ENCODE measurements at regions of chr7 and their contacts with region 1.

Region 1: GRCh38 chr7:23679898-23680413 is at the start of gene FAM221A:
- DNase-seq: peak; percentile 95
- H3K4me3 ChIP-seq: peak within 1 kb of the TSS; percentile 68 to 74
- H3K27ac ChIP-seq: peak within 1 kb of the TSS in 1 of 2 experiments; percentile 84; a peak in 2 of 4 replicates
- H3K4me1 ChIP-seq: peaks cover 0 to 6% of the 10 kb centered on the region in 2 experiments; a peak in 1 of 4 replicates
- H3K27me3 ChIP-seq: no peaks in the 10 kb centered on the region
- CTCF ChIP-seq: peak; percentile 77
- EP300 ChIP-seq: peak in 1 of 2 experiments; percentile 9; a peak in 1 of 4 replicates
- RAD21 ChIP-seq: no peak
- polyA plus RNA-seq, gene FAM221A: 9.7 and 10.5 TPM in 2 replicates

Region 2: DNA sequence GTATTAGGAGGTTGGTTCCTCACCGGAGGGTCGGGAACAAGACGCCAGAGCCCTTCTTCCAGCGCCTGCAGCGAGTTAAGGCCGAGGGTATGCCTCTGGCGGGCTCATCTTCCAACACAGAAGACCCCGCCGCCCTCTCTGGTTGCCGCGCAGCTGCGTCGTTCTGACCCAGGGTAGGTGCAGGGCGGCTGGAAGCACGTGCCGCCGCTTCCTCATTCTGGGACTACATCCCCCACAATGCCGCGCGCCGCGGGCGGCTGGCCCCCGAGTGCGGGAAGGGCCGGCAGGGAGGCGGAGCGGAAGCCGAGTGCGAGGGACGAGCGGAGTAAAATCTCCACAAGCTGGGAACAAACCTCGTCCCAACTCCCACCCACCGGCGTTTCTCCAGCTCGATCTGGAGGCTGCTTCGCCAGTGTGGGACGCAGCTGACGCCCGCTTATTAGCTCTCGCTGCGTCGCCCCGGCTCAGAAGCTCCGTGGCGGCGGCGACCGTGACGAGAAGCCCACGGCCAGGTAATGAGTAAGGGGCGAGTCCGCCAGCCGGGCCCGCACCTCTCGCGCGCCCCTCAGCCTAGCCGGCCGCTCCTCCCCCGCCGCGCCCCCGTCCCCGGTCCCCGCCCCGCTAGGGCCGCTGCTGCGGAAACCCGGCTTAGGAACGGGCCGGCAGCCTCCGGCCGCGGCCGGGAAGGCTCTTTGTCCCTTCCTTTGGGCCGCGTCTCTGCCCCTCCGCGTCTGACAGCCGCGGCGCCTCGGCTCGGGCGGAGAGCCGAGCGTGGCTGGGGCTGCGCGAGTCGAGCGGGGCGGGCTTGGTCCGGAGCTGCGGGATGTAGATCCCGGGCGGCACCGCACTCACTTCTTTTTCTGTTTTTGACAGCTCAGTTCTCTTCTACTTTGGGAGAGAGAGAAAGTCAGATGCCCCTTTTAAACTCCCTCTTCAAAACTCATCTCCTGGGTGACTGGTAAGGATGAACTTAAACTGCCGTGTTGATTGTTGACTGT is 82.6 kb before region 1 on chr7 and contains the start of gene CCDC126:
- CTCF ChIA-PET with region 1: interaction called, 10 read pairs
- POLR2A ChIA-PET with region 1: interaction called, 4 read pairs
- DNase-seq: peak; percentile 98
- H3K4me3 ChIP-seq: peak within 1 kb of the TSS; percentile 73 to 77
- H3K27ac ChIP-seq: peak within 1 kb of the TSS; percentile 87 to 90
- H3K4me1 ChIP-seq: peaks cover 0 to 10% of the 10 kb centered on the region in 2 experiments; a peak in 2 of 4 replicates
- H3K27me3 ChIP-seq: no peaks in the 10 kb centered on the region
- CTCF ChIP-seq: no peak
- EP300 ChIP-seq: peak in 1 of 2 experiments; percentile 6; a peak in 1 of 4 replicates
- RAD21 ChIP-seq: no peak
- polyA plus RNA-seq, gene CCDC126: 5.5 and 6.8 TPM in 2 replicates

Region 3: DNA sequence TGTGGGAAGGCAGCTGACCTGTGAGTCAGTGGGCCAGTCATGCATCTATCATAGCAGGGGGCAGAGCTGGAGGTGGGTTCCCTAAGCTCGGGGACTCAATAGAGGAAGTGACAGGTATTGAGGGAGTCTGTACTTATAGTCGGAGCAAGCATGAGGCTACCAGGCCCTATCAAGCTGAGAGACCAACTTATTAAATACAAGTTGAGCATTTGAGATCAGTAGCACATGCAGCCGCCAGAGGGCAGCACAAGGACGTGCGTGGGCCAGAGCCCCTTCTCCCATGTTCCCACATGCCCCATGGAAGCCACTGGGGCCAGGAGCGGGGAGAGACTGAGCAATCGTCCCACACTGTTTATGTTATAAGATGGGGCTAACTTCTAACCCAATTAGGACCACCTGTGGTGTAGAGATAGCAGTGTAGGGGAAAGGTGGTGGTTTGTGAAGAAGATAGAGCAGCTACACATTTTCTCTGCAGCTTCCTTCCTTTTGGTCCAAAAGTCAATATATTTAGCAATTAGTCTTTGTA is 17.0 kb after region 1 on chr7:
- CTCF ChIA-PET with region 1: interaction called, 41 read pairs
- POLR2A ChIA-PET with region 1: interaction called, 3 read pairs
- DNase-seq: peak; percentile 61
- H3K4me3 ChIP-seq: no peak overlapping the region
- H3K27ac ChIP-seq: no peak overlapping the region
- H3K4me1 ChIP-seq: no peaks in the 10 kb centered on the region
- H3K27me3 ChIP-seq: no peaks in the 10 kb centered on the region
- CTCF ChIP-seq: peak; percentile 77
- EP300 ChIP-seq: no peak
- RAD21 ChIP-seq: peak; percentile 54

Region 4: GRCh38 chr7:23712368-23713284 is 32.7 kb after region 1 on chr7:
- CTCF ChIA-PET with region 1: interaction called, 16 read pairs
- POLR2A ChIA-PET with region 1: no interaction called
- DNase-seq: peak; percentile 79
- H3K4me3 ChIP-seq: no peak overlapping the region
- H3K27ac ChIP-seq: no peak overlapping the region
- H3K4me1 ChIP-seq: peaks cover 3 to 14% of the 10 kb centered on the region in 2 experiments; a peak in 2 of 4 replicates
- H3K27me3 ChIP-seq: no peaks in the 10 kb centered on the region
- CTCF ChIP-seq: peak; percentile 89
- EP300 ChIP-seq: no peak
- RAD21 ChIP-seq: peak; percentile 99